OCI-LY7 (cell line): ENCODE measurements at regions of chr7 and their contacts with region 1.

Region 1: GRCh38 chr7:98841179-98841997 is 28.4 kb downstream of the TMEM130 start:
- DNase-seq: peak; percentile 56
- H3K4me3 ChIP-seq: no peak overlapping the region
- H3K27ac ChIP-seq: no peak overlapping the region
- H3K4me1 ChIP-seq: no peaks in the 10 kb centered on the region
- CTCF ChIP-seq: peak; percentile 96

Region 2: GRCh38 chr7:98021588-98022351 is 819.6 kb before region 1 on chr7:
- CTCF ChIA-PET with region 1: no interaction called
- POLR2A ChIA-PET with region 1: no interaction called
- intact Hi-C with region 1: loop called (anchors 5 kb)
- DNase-seq: peak; percentile 73
- H3K4me3 ChIP-seq: no peak overlapping the region
- H3K27ac ChIP-seq: no peak overlapping the region
- H3K4me1 ChIP-seq: no peaks in the 10 kb centered on the region
- CTCF ChIP-seq: peak; percentile 94

Region 3: DNA sequence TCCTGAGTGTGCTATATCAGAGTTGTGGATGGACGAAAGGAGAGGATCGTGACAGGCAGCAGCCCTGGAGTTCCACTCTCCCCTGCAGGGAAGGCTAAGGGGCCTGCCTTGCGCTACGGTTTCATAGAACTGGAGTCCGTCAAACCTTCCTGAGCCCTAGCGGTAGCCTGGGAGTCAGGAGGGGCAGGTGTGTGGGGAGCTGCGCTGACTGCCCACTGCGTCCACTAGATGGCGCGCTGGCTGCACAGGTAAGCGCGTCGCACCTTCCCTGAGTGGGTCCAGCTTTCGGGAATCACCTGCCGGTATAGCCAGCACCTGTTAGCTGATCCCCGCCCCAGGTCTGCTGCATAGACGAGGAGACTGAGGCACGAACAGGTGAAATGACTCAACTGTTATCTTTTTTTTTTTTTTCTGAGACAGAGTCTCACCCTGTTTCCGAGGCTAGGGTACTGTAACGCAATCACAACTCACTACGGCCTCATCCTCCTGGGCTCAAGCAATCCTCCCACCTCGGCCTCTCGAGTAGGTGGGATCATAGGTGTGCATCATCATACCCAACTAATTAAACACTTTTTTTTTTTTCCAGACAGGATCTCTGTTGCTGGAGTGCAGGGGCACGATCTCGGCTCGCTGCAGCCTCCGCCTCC is 420.3 kb before region 1 on chr7:
- CTCF ChIA-PET with region 1: interaction called, 3 read pairs
- POLR2A ChIA-PET with region 1: no interaction called
- intact Hi-C with region 1: loop called (anchors 1 kb)
- DNase-seq: peak; percentile 73
- H3K4me3 ChIP-seq: no peak overlapping the region
- H3K27ac ChIP-seq: no peak overlapping the region
- H3K4me1 ChIP-seq: no peaks in the 10 kb centered on the region
- CTCF ChIP-seq: peak; percentile 97

Region 4: GRCh38 chr7:98733036-98733435 is 108.4 kb before region 1 on chr7:
- CTCF ChIA-PET with region 1: no interaction called
- POLR2A ChIA-PET with region 1: no interaction called
- intact Hi-C with region 1: loop called (anchors 2 kb)
- DNase-seq: peak; percentile 71
- H3K4me3 ChIP-seq: no peak overlapping the region
- H3K27ac ChIP-seq: no peak overlapping the region
- H3K4me1 ChIP-seq: no peaks in the 10 kb centered on the region
- CTCF ChIP-seq: peak; percentile 92

Region 5: GRCh38 chr7:98870121-98870651 is 28.8 kb after region 1 on chr7:
- CTCF ChIA-PET with region 1: interaction called, 6 read pairs
- POLR2A ChIA-PET with region 1: interaction called, 3 read pairs
- intact Hi-C with region 1: loop called (anchors 2 kb)
- DNase-seq: peak; percentile 97
- H3K4me3 ChIP-seq: peak overlapping the region; percentile 64
- H3K27ac ChIP-seq: peak overlapping the region; percentile 82
- H3K4me1 ChIP-seq: peaks cover 40% of the 10 kb centered on the region
- CTCF ChIP-seq: no peak

Region 6: GRCh38 chr7:99235925-99236324 is 394.5 kb after region 1 on chr7:
- CTCF ChIA-PET with region 1: no interaction called
- POLR2A ChIA-PET with region 1: no interaction called
- intact Hi-C with region 1: no loop called
- DNase-seq: no peak
- H3K4me3 ChIP-seq: no peak overlapping the region
- H3K27ac ChIP-seq: no peak overlapping the region
- H3K4me1 ChIP-seq: no peaks in the 10 kb centered on the region
- CTCF ChIP-seq: no peak